CD4-positive, alpha-beta memory T cell (primary cell): ENCODE measurements at regions of chr1 and their contacts with region 1.

Region 1: DNA sequence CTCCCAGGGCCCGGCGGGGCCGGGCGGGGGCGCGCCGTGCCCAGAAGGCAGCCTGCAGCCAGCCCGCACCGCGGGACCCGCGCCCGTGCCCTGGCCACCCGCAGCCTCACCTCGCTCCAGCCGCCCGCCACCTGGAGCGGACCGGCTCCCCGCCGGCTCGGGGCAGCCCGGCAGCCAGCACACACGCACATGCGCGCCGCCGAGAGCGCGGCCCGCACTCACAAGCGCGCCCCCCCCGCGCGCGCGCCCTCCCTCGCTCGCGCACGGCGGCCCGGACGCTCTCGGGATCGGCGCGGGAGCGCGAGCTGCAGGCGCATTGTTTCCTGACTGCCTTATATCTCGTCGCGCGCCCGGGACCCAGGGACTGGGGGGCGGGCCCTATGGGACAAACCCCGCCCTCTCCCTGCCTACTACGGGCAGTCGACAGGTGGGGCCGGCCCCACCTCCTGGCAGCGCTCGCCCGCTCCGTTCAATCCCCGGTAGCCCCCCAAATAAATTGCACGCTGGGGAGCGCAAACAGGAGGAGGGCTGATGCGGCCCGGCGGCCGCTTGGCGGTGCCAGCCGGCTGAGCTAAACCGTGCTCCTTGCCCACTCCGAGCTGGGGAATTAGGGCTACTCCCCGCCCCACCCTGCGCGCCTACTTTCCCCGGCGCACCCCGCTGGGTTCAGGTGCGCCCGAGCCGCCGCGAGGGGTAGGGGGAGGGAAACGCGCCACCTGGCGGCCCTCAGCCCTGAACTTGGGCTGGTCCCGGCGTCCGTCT is at the start of gene MYCL:
- DNase-seq: peak; percentile 59 to 68 (median 63)
- H3K4me3 ChIP-seq: peak within 1 kb of the TSS; percentile 23 to 58
- H3K4me3 Mint-ChIP-seq: peak within 1 kb of the TSS; percentile 72 to 84 (median 78)
- H3K27ac ChIP-seq: no peak within 1 kb of the TSS
- H3K27ac Mint-ChIP-seq: no peak within 1 kb of the TSS
- H3K4me1 ChIP-seq: peaks cover 9% of the 10 kb centered on the region
- H3K4me1 Mint-ChIP-seq: peaks cover 0 to 11% (median 4%) of the 10 kb centered on the region in 4 donors
- H3K27me3 ChIP-seq: peaks cover 9% of the 10 kb centered on the region
- H3K27me3 Mint-ChIP-seq: peaks cover 21 to 39% of the 10 kb centered on the region in 2 donors
- total RNA-seq, gene MYCL: 0.19 to 0.20 TPM

Region 2: DNA sequence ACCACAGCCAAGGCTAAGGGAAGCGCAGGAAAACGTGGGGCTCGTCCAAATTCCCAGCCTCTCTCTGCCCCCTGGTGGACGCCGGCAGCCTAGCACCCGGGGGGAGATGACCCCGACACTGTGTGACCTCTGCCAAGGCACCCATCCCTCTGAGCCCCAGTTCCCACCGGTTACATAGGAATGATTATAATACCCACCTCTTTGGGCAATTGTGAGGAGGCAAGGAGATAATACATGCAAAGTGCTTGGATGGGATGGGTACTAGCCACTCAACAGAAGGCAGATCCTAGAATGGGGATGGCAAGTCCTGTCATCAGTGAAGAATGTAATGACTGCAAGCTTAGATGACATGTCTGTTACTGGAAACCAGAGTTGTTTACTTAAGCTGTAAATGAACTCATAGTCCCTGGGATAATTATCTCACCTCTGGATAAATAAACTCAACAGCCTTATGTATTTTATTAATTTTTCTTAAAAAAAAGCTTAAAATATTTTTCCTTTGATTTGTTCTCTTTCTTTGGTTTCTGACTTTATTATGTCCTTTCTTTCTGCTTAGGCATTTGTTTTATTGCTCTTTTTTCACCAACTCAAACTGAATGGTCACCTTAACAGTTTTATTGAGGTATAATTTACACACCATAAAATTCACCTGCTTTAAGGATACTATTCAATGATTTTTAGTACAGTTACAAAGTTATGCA is 102.0 kb before region 1 on chr1:
- CTCF ChIA-PET with region 1: interaction called, 12 read pairs
- POLR2A ChIA-PET with region 1: no interaction called
- intact Hi-C with region 1: no loop called
- DNase-seq: peak; percentile 46 to 65 (median 60)
- H3K4me3 ChIP-seq: peak overlapping the region in 1 of 2 donors; percentile 26
- H3K4me3 Mint-ChIP-seq: peak overlapping the region; percentile 59 to 84 (median 78)
- H3K27ac ChIP-seq: peak overlapping the region; percentile 57
- H3K27ac Mint-ChIP-seq: peak overlapping the region; percentile 8 to 97 (median 95)
- H3K4me1 ChIP-seq: peaks cover 8% of the 10 kb centered on the region
- H3K4me1 Mint-ChIP-seq: peaks cover 5 to 14% (median 11%) of the 10 kb centered on the region in 4 donors
- H3K27me3 ChIP-seq: no peaks in the 10 kb centered on the region
- H3K27me3 Mint-ChIP-seq: no peaks in the 10 kb centered on the region

Region 3: GRCh38 chr1:39835935-39836594 is 65.8 kb before region 1 on chr1:
- CTCF ChIA-PET with region 1: interaction called, 15 read pairs
- POLR2A ChIA-PET with region 1: no interaction called
- intact Hi-C with region 1: no loop called
- DNase-seq: no peak
- H3K4me3 ChIP-seq: no peak overlapping the region
- H3K4me3 Mint-ChIP-seq: no peak overlapping the region
- H3K27ac ChIP-seq: no peak overlapping the region
- H3K27ac Mint-ChIP-seq: no peak overlapping the region
- H3K4me1 ChIP-seq: peaks cover 2% of the 10 kb centered on the region
- H3K4me1 Mint-ChIP-seq: peaks cover 0 to 8% (median 4%) of the 10 kb centered on the region in 4 donors
- H3K27me3 ChIP-seq: no peaks in the 10 kb centered on the region
- H3K27me3 Mint-ChIP-seq: no peaks in the 10 kb centered on the region

Region 4: DNA sequence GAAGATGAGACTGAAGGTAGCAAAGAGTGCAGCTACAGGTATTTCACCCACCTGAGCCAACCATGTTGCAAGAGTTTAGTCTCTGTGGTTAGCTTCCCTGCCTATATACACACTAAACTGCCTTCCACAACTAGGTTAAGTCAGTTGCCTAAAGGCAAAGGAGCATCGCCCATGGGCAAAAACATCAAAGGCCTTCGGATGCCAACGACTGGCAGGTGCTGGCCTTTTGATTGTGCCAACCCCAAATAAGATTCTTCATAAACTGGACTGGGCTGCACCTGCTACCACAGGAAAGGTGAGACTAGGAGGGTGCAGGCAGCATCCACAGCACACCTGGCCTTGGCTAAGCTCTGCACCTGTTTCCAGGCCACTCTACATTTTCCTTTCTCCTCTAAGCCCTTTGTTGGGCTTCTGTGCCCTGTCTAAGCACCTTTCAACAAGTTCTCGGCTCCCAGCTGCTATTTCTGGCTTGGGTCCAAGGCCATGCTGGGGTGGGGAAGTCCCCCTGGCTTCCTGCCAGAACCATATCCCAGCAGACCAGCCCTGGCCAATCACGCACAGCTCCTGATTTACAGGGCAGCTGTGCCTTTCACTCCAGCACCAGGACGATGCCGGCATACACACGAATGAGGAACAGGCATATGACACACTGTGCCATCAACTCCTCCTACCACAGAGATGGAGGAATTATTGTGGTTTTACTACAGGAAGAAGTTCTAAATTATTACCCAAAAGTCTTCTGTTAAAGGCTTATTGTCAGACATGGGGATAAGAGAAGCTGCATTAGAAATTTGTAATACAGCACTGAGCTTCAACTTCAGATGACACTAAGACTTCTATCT is 56.4 kb before region 1 on chr1:
- CTCF ChIA-PET with region 1: interaction called, 29 read pairs
- POLR2A ChIA-PET with region 1: no interaction called
- intact Hi-C with region 1: no loop called
- DNase-seq: peak; percentile 86 to 96 (median 90)
- H3K4me3 ChIP-seq: no peak overlapping the region
- H3K4me3 Mint-ChIP-seq: peak overlapping the region; percentile 55 to 88 (median 67)
- H3K27ac ChIP-seq: peak overlapping the region; percentile 68
- H3K27ac Mint-ChIP-seq: peak overlapping the region; percentile 92 to 97 (median 93)
- H3K4me1 ChIP-seq: peaks cover 56% of the 10 kb centered on the region
- H3K4me1 Mint-ChIP-seq: peaks cover 46 to 64% (median 52%) of the 10 kb centered on the region in 4 donors
- H3K27me3 ChIP-seq: no peaks in the 10 kb centered on the region
- H3K27me3 Mint-ChIP-seq: no peaks in the 10 kb centered on the region

Region 5: DNA sequence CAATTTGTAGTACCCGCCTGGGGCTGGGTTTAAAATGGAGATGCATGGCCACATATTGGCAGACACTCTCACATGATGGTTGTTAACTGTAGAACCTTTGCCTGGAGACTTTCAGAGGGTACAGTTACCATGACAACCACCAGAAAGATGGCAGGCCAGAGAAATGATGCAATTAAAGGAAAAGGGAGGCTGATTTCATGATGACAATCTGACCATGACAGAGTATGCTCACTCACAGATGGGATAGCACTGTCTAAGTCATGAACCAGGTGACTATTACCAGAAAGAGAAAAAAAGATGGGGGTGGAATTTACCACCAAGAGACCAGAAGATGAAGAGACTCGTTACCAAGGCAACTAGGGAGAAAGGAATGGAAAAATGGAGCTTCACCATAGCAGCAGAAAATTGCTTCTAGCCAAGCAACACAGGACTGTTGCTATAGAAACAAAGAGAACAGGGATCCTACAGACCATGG is 15.1 kb before region 1 on chr1:
- CTCF ChIA-PET with region 1: interaction called, 12 read pairs
- POLR2A ChIA-PET with region 1: interaction called, 3 read pairs
- intact Hi-C with region 1: loop called (anchors 1 kb)
- DNase-seq: no peak
- H3K4me3 ChIP-seq: no peak overlapping the region
- H3K4me3 Mint-ChIP-seq: no peak overlapping the region
- H3K27ac ChIP-seq: no peak overlapping the region
- H3K27ac Mint-ChIP-seq: no peak overlapping the region
- H3K4me1 ChIP-seq: peaks cover 12% of the 10 kb centered on the region
- H3K4me1 Mint-ChIP-seq: peaks cover 10 to 18% (median 15%) of the 10 kb centered on the region in 4 donors
- H3K27me3 ChIP-seq: no peaks in the 10 kb centered on the region
- H3K27me3 Mint-ChIP-seq: peaks cover 1 to 4% of the 10 kb centered on the region in 2 donors

Region 6: GRCh38 chr1:39919545-39919944 is 17.7 kb after region 1 on chr1:
- CTCF ChIA-PET with region 1: interaction called, 11 read pairs
- POLR2A ChIA-PET with region 1: no interaction called
- intact Hi-C with region 1: no loop called
- DNase-seq: peak; percentile 48 to 70 (median 67)
- H3K4me3 ChIP-seq: no peak overlapping the region
- H3K4me3 Mint-ChIP-seq: no peak overlapping the region
- H3K27ac ChIP-seq: no peak overlapping the region
- H3K27ac Mint-ChIP-seq: no peak overlapping the region
- H3K4me1 ChIP-seq: no peaks in the 10 kb centered on the region
- H3K4me1 Mint-ChIP-seq: no peaks in the 10 kb centered on the region
- H3K27me3 ChIP-seq: no peaks in the 10 kb centered on the region
- H3K27me3 Mint-ChIP-seq: peaks cover 3 to 5% of the 10 kb centered on the region in 2 donors

Region 7: DNA sequence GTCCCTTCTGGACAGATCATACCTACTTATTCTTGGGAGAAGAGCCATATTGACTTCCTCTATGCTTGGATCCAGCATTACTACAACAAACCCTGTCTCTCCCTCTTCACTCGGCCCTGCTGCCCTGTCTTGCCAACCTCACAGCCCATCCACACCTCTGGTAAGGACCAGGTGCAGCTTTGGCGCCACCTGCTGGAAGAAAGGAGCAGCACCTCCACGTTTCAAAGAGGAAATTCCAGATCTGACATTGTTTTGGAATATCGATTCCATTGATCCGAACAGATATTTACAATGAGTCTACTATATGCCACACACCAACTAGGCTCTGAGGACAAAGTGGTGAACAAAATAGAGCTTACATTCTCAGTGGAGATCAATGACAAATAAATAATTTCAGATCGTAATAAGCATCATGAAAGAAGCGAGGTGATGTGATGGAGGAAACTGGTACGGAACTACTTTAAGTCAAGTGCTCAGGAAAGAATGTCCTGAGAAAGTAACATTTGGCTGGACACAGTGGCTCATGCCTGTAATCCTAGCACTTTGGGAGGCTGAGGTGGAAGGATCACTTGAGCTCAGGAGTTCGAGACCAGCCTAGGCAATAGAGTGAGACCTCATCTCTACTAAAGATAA is 71.7 kb after region 1 on chr1:
- CTCF ChIA-PET with region 1: interaction called, 21 read pairs
- POLR2A ChIA-PET with region 1: no interaction called
- intact Hi-C with region 1: loop called (anchors 5 kb)
- DNase-seq: peak; percentile 65 to 68 (median 66)
- H3K4me3 ChIP-seq: no peak overlapping the region
- H3K4me3 Mint-ChIP-seq: peak overlapping the region in 1 of 8 donors; percentile 43
- H3K27ac ChIP-seq: no peak overlapping the region
- H3K27ac Mint-ChIP-seq: peak overlapping the region in 1 of 7 donors; percentile 43
- H3K4me1 ChIP-seq: no peaks in the 10 kb centered on the region
- H3K4me1 Mint-ChIP-seq: peaks cover 5 to 7% (median 6%) of the 10 kb centered on the region in 4 donors
- H3K27me3 ChIP-seq: no peaks in the 10 kb centered on the region
- H3K27me3 Mint-ChIP-seq: no peaks in the 10 kb centered on the region